ENCODE measurements at regions of chr22 and their contacts with region 1.

Region 1: DNA sequence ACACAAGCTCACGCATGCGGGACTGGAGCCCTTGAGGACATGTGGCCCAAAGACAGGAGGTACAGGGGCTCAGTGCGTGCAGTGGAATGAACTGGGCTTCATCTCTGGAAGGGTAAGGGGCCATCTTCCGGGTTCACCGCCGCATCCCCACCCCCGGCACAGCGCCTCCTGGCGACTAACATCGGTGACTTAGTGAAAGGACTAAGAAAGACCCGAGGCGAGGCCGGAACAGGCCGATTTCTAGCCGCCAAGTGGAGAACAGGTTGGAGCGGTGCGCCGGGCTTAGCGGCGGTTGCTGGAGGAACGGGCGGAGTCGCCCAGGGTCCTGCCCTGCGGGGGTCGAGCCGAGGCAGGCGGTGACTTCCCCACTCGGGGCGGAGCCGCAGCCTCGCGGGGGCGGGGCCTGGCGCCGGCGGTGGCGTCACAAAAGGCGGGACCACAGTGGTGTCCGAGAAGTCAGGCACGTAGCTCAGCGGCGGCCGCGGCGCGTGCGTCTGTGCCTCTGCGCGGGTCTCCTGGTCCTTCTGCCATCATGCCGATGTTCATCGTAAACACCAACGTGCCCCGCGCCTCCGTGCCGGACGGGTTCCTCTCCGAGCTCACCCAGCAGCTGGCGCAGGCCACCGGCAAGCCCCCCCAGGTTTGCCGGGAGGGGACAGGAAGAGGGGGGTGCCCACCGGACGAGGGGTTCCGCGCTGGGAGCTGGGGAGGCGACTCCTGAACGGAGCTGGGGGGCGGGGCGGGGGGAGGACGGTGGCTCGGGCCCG is at the start of gene MIF:
- DNase-seq: peak; percentile 96
- H3K4me3 ChIP-seq: peak within 1 kb of the TSS; percentile 62 to 76 (median 72)
- H3K27ac ChIP-seq: peak within 1 kb of the TSS; percentile 91 to 98 (median 94)
- H3K4me1 ChIP-seq: peaks cover 0 to 29% (median 15%) of the 10 kb centered on the region in 4 donors
- H3K27me3 ChIP-seq: no peaks in the 10 kb centered on the region
- CTCF ChIP-seq: peak; percentile 73 to 88 (median 82)
- EP300 ChIP-seq: no peak
- POLR2A ChIP-seq: peak; percentile 73 to 79
- total RNA-seq, gene MIF: 159 to 296 (median 216) TPM

Region 2: DNA sequence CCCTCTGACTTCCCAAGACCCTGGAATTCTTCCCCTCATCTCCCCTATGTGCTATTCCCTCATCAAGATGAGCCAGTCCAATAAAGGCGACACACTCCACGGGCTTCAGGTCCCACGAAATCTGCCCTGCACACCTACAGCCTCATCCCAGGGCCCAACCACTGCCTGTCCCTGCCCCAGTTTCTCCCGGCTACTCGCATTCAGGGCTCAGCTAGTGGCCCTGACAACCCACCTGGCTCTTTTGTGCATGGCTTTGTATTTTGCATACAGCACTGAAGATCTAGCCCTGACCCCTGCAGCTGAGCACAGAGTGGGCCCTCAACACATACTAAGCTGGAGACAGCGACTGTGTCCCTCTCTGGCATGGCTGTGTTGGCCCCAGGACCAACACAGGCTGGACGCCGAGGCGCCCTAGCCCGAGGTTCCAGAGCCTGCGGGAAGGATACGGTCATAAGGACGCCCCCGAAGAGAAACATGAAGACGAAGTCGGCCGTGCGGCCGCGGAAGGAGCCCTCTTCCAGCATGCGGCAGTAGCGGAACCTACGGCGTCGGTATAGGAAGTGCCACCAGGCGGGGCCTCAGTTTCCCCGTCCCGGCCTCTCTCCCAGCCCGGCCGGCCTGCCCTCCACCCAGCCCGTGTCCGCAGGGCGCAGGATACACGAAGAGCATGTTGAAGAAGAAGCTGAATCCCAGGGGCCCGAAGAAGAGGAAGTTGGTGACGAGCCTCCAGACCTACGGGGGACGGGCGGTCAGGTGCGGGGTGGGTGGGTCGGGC is 56.0 kb before region 1 on chr22:
- intact Hi-C with region 1: no loop called
- DNase-seq: no peak
- H3K4me3 ChIP-seq: peak overlapping the region in 3 of 4 donors; percentile 35 to 48 (median 41)
- H3K27ac ChIP-seq: no peak overlapping the region
- H3K4me1 ChIP-seq: peaks cover 0 to 26% (median 22%) of the 10 kb centered on the region in 4 donors
- H3K27me3 ChIP-seq: no peaks in the 10 kb centered on the region
- CTCF ChIP-seq: no peak
- EP300 ChIP-seq: no peak
- POLR2A ChIP-seq: no peak

Region 3: GRCh38 chr22:23857606-23858483 is 36.3 kb before region 1 on chr22 and contains the start of gene SLC2A11:
- intact Hi-C with region 1: loop called (anchors 5 kb)
- DNase-seq: peak; percentile 98
- H3K4me3 ChIP-seq: peak within 1 kb of the TSS; percentile 48 to 78 (median 62)
- H3K27ac ChIP-seq: peak within 1 kb of the TSS; percentile 94 to 99 (median 98)
- H3K4me1 ChIP-seq: peaks cover 0 to 22% (median 17%) of the 10 kb centered on the region in 4 donors
- H3K27me3 ChIP-seq: no peaks in the 10 kb centered on the region
- CTCF ChIP-seq: peak; percentile 4 to 60 (median 11)
- EP300 ChIP-seq: no peak
- POLR2A ChIP-seq: peak; percentile 83
- total RNA-seq, gene SLC2A11: 13.8 to 23.5 (median 16.4) TPM

Region 4: DNA sequence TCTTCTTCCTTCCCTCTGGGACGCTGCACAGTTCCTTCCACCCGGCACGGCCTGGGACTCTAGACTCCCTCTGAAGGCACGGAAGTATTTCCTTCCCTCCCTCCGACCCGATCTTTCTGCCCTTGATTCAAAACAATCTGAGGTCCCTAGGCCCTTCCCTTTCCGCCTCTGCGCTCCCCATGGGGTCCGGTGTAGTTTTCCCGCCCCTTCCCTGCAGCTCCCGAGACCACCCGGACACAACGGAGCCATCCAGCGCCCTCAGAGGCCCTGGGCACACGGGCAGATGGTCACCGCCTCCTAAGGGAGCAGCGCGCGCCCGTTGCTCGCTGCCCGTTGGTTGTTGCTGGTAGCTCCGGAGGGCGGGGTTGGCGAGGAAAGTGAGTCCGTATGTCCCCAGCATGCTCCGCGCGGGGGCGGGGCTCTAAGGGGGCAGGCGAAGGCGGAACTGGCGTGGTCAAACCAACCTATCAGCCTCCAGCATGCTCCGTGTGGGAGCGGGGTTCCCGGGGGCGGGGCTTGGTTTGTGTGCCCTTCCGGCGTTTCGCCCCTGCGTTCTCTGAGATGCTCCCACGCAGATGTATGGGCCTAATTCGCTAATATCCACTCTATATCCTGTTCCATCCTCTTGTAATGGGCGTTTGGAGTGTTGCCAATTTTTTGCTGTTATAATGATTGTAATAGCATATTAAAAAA is 19.7 kb after region 1 on chr22:
- intact Hi-C with region 1: loop called (anchors 2 kb)
- DNase-seq: peak; percentile 100
- H3K4me3 ChIP-seq: peak overlapping the region; percentile 40 to 57 (median 56)
- H3K27ac ChIP-seq: peak overlapping the region; percentile 84 to 91 (median 89)
- H3K4me1 ChIP-seq: peaks cover 0 to 17% (median 11%) of the 10 kb centered on the region in 4 donors
- H3K27me3 ChIP-seq: no peaks in the 10 kb centered on the region
- CTCF ChIP-seq: no peak
- EP300 ChIP-seq: peak in 1 of 4 donors; percentile 65
- POLR2A ChIP-seq: peak; percentile 69 to 75